B cell (primary cell): ENCODE measurements at regions of chr19 and their contacts with region 1.

Region 1: DNA sequence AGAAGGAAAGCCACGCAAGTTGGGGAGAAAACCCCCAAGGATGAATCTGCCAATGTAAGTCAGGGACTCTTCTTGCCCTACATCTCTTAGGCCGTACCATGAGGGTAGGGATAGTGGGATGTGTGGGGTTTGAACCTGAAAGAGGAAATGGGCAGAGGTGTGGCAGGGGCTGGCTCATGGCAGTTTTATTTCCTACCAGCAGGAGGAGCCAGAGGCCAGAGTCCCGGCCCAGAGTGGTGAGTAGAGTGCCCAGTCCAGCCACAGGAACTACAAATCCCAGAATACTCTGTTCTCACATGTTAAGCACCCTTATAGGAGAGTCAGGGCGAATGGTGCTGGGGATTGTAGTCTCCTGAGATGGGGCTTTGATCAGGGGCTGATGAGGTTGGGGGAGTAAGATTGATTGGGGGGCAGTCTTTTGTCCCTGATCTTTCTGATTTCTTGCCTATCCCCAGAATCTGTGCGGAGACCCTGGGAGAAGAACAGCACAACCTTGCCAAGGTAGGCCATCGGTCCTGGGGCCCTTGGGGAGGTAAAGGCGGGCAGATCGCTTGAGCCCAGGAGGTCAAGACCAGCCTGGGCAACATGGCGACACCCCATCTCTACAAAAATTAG is 16.5 kb downstream of the VASP start:
- DNase-seq: peak; percentile 91
- ATAC-seq: peak; percentile 99
- H3K4me3 ChIP-seq: no peak overlapping the region
- H3K4me3 Mint-ChIP-seq: no peak overlapping the region
- H3K27ac ChIP-seq: peak overlapping the region in 1 of 2 donors; percentile 39
- H3K27ac Mint-ChIP-seq: peak overlapping the region; percentile 85
- H3K4me1 ChIP-seq: peaks cover 8 to 16% of the 10 kb centered on the region in 2 donors
- H3K4me1 Mint-ChIP-seq: peaks cover 23% of the 10 kb centered on the region
- H3K27me3 ChIP-seq: no peaks in the 10 kb centered on the region
- H3K27me3 Mint-ChIP-seq: no peaks in the 10 kb centered on the region
- CTCF ChIP-seq: peak; percentile 89

Region 2: GRCh38 chr19:45496349-45496953 is 27.3 kb before region 1 on chr19:
- CTCF ChIA-PET with region 1: interaction called, 7 read pairs
- POLR2A ChIA-PET with region 1: no interaction called
- intact Hi-C with region 1: loop called (anchors 1 kb)
- DNase-seq: peak; percentile 66
- ATAC-seq: peak; percentile 6
- H3K4me3 ChIP-seq: peak overlapping the region in 4 of 5 experiments; percentile 52 to 64 (median 60)
- H3K4me3 Mint-ChIP-seq: peak overlapping the region; percentile 73
- H3K27ac ChIP-seq: no peak overlapping the region
- H3K27ac Mint-ChIP-seq: no peak overlapping the region
- H3K4me1 ChIP-seq: peaks cover 43 to 51% of the 10 kb centered on the region in 2 donors
- H3K4me1 Mint-ChIP-seq: peaks cover 45% of the 10 kb centered on the region
- H3K27me3 ChIP-seq: peaks cover 0 to 49% (median 24%) of the 10 kb centered on the region in 4 experiments
- H3K27me3 Mint-ChIP-seq: peaks cover 21% of the 10 kb centered on the region
- CTCF ChIP-seq: no peak

Region 3: DNA sequence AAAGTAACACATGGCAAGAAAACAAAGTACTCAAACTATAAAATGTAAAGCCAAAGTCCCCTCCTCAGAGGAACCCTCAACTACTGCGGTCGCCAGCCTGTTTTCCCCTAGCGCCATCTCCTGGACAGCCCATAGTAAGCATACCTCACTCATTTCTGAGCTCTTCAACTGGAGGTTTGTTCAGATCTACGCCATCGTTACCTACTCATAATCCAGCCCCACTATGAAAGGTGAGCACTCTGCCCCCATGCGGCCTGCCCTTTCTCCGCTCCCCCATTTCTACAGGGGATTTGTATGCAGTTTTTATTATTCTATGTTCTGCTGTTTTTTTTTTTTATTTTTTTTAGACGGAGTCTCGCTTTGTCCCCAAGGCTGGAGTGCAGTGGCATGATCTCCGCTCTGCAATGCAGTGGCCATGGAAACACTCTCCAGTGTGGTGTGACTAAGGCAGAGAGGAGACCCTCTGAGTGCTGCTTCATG is 34.7 kb after region 1 on chr19:
- CTCF ChIA-PET with region 1: interaction called, 16 read pairs
- POLR2A ChIA-PET with region 1: interaction called, 3 read pairs
- intact Hi-C with region 1: loop called (anchors 1 kb)
- DNase-seq: peak; percentile 84
- ATAC-seq: peak; percentile 98
- H3K4me3 ChIP-seq: no peak overlapping the region
- H3K4me3 Mint-ChIP-seq: no peak overlapping the region
- H3K27ac ChIP-seq: peak overlapping the region in 1 of 2 donors; percentile 30
- H3K27ac Mint-ChIP-seq: peak overlapping the region; percentile 8
- H3K4me1 ChIP-seq: peaks cover 3 to 31% of the 10 kb centered on the region in 2 donors
- H3K4me1 Mint-ChIP-seq: peaks cover 23% of the 10 kb centered on the region
- H3K27me3 ChIP-seq: no peaks in the 10 kb centered on the region
- H3K27me3 Mint-ChIP-seq: no peaks in the 10 kb centered on the region
- CTCF ChIP-seq: peak; percentile 85

Region 4: GRCh38 chr19:45681391-45682015 is 157.8 kb after region 1 on chr19:
- CTCF ChIA-PET with region 1: interaction called, 4 read pairs
- POLR2A ChIA-PET with region 1: no interaction called
- intact Hi-C with region 1: loop called (anchors 1 kb)
- DNase-seq: peak; percentile 92
- ATAC-seq: peak; percentile 95
- H3K4me3 ChIP-seq: peak overlapping the region in 4 of 5 experiments; percentile 29 to 57 (median 46)
- H3K4me3 Mint-ChIP-seq: peak overlapping the region; percentile 87
- H3K27ac ChIP-seq: no peak overlapping the region
- H3K27ac Mint-ChIP-seq: peak overlapping the region; percentile 50
- H3K4me1 ChIP-seq: peaks cover 24 to 31% of the 10 kb centered on the region in 2 donors
- H3K4me1 Mint-ChIP-seq: peaks cover 23% of the 10 kb centered on the region
- H3K27me3 ChIP-seq: peaks cover 0 to 27% (median 10%) of the 10 kb centered on the region in 4 experiments
- H3K27me3 Mint-ChIP-seq: peaks cover 13% of the 10 kb centered on the region
- CTCF ChIP-seq: peak; percentile 98